ENCODE measurements at regions of chr13 and their contacts with region 1.

Region 1: DNA sequence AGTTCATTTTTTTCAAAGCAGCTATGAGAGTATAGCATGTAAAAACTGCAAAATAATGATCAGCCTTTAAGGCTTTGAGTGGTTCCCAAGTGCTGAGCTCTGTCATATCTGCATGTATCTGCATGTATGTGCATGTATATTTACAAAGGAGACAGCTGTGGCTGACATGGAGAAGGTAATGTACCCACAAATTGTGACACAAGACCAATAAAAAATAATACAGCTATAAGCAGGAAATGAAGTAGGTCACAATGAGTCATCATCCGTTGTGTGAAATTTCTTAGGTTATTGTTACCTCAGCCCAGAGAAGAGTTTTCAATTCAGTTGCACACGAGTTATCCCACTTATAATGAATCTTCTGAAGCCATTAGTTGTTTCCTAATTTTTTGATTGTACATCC is 60.9 kb upstream of the MED4 start:
- DNase-seq: peak; percentile 44
- H3K4me3 Mint-ChIP-seq: peak overlapping the region; percentile 74
- H3K27ac Mint-ChIP-seq: peak overlapping the region; percentile 99
- H3K4me1 Mint-ChIP-seq: peaks cover 85% of the 10 kb centered on the region
- H3K27me3 Mint-ChIP-seq: no peaks in the 10 kb centered on the region

Region 2: GRCh38 chr13:46176756-46177155 is 1979.1 kb before region 1 on chr13:
- CTCF ChIA-PET with region 1: no interaction called
- intact Hi-C with region 1: loop called (anchors 10 kb)
- DNase-seq: no peak
- H3K4me3 Mint-ChIP-seq: peak overlapping the region; percentile 72
- H3K27ac Mint-ChIP-seq: peak overlapping the region; percentile 98
- H3K4me1 Mint-ChIP-seq: peaks cover 56% of the 10 kb centered on the region
- H3K27me3 Mint-ChIP-seq: no peaks in the 10 kb centered on the region

Region 3: DNA sequence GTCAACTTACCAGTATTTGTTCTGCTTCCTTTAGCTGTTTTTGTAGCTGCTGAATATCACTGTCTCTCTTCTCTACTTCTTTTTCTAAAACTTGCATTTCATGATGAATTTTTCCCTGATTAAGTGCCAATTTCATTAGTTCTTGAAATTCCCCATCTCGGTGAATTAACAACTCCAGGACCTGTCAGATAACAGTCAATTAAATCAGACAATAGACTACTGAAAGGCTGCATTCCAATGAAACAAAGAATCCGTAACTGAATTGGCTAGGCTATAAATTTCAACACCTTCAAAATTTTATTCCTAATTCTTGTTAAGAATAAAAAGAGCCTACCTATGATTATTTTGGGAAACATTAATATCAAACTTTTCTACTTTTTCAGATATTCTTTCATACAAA is 69.6 kb before region 1 on chr13:
- CTCF ChIA-PET with region 1: no interaction called
- intact Hi-C with region 1: no loop called
- DNase-seq: no peak
- H3K4me3 Mint-ChIP-seq: no peak overlapping the region
- H3K27ac Mint-ChIP-seq: no peak overlapping the region
- H3K4me1 Mint-ChIP-seq: peaks cover 15% of the 10 kb centered on the region
- H3K27me3 Mint-ChIP-seq: no peaks in the 10 kb centered on the region

Region 4: DNA sequence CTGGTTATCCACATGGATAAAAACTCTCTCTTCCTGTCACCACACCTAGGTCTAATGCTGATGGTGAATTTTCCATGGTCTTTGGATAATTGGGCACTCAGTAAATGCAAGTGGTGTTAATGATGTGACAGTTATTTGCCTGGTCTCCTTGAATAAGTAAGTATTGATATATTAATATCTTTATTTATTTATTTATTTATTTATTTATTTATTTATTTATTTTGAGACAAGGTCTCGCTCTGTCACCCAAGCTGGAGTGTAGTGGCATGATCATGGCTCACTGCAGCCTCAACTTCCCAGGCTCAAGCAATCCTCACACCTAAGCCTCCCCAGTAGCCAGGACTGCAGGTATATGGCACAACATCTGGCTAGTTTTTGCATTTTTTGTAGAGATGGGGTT is 30.9 kb after region 1 on chr13:
- CTCF ChIA-PET with region 1: interaction called, 3 read pairs
- intact Hi-C with region 1: loop called (anchors 1 kb)
- DNase-seq: no peak
- H3K4me3 Mint-ChIP-seq: no peak overlapping the region
- H3K27ac Mint-ChIP-seq: no peak overlapping the region
- H3K4me1 Mint-ChIP-seq: peaks cover 58% of the 10 kb centered on the region
- H3K27me3 Mint-ChIP-seq: no peaks in the 10 kb centered on the region

Region 5: DNA sequence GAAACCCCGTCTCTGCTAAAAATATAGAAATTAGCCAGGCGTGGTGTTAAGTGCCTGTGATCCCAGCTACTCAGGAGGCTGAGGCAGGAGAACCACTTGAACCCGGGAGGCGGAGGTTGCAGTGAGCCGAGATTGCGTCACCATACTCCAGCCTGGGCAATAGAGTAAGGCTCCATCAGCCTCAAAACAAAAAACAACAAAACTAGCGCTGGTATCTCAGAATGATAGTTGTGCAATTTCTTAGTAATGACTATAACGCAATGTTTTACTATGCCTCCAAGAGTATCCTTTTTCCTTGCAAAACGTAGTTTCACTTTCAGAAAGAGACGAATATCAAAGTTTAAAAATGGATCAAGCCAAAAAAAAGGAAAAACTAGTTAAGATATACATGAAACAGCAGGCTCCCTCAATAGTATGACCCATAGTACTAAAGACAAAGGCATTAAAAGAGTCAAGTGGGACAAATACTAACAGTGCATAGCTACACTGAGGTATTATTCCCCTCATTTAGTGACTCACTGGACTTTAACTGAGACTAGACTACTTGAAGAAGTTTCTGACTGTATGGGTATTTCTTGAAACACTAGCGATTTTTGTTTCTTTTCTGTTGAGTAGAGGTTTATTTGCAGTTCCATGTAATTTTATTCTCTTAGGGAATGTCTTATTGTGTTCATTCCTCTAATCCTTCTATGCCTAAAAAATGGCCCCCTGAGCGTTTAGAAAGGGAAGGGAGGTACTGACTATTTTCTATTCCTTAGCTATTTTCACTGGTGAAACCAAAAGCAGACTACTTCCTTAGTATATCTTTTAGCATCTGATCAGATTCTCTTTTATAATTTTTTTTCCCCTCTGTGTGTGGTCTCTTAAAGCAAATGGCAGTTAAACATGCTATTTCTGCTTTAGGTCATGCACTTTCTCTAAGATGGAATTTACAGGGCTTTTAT is 66.8 kb after region 1 on chr13:
- CTCF ChIA-PET with region 1: no interaction called
- intact Hi-C with region 1: loop called (anchors 1 kb)
- DNase-seq: no peak
- H3K4me3 Mint-ChIP-seq: no peak overlapping the region
- H3K27ac Mint-ChIP-seq: peak overlapping the region; percentile 5
- H3K4me1 Mint-ChIP-seq: peaks cover 55% of the 10 kb centered on the region
- H3K27me3 Mint-ChIP-seq: no peaks in the 10 kb centered on the region

Measured in activated naive CD4-positive, alpha-beta T cell treated with anti-CD3 and anti-CD28 coated beads for 36 hours (primary cell).